ENCODE measurements at regions of chr2 and their contacts with region 1.

Region 1: DNA sequence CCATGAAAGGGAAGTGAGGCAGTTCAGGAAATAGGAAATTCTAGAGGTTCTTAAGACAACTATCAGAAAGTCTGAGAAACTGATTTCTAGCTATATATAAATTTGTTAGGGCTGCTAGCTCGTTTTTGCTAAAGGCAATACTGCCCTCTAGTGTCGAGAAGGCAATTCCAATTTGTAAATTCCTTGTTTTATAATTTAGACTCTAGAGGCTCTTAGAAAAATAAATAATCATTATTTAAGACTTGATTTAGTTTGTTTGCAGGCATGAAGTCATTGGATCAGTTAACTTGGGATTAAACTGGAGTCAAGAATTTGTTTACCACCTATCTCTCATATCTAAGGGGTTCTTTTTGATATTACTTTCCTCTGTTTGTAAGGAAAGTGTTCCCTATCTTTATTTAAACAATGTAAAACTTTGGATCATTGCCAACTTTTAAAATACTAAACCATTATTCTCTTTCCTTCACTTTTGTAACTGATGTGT is 66.2 kb downstream of the ACVR2A start:
- DNase-seq: no peak
- ATAC-seq: peak; percentile 40 to 84 (median 60)
- H3K4me3 ChIP-seq: no peak overlapping the region
- H3K27ac ChIP-seq: no peak overlapping the region
- H3K4me1 ChIP-seq: peaks cover 4% of the 10 kb centered on the region
- H3K27me3 ChIP-seq: no peaks in the 10 kb centered on the region
- CTCF ChIP-seq: peak; percentile 85

Region 2: GRCh38 chr2:146734042-146734820 is 1176.8 kb before region 1 on chr2:
- intact Hi-C with region 1: loop called in 1 of 2 experiments (anchors 5 kb)
- DNase-seq: no peak
- ATAC-seq: peak; percentile 71 to 81 (median 80)
- H3K4me3 ChIP-seq: no peak overlapping the region
- H3K27ac ChIP-seq: no peak overlapping the region
- H3K4me1 ChIP-seq: peaks cover 6% of the 10 kb centered on the region
- H3K27me3 ChIP-seq: no peaks in the 10 kb centered on the region
- CTCF ChIP-seq: peak; percentile 53

Region 3: GRCh38 chr2:146927080-146927711 is 983.8 kb before region 1 on chr2:
- intact Hi-C with region 1: loop called in 1 of 2 experiments (anchors 10 kb)
- DNase-seq: peak; percentile 42 to 66
- ATAC-seq: peak in 3 of 4 donors; percentile 55 to 60 (median 59)
- H3K4me3 ChIP-seq: no peak overlapping the region
- H3K27ac ChIP-seq: no peak overlapping the region
- H3K4me1 ChIP-seq: no peaks in the 10 kb centered on the region
- H3K27me3 ChIP-seq: no peaks in the 10 kb centered on the region
- CTCF ChIP-seq: peak; percentile 39

Region 4: DNA sequence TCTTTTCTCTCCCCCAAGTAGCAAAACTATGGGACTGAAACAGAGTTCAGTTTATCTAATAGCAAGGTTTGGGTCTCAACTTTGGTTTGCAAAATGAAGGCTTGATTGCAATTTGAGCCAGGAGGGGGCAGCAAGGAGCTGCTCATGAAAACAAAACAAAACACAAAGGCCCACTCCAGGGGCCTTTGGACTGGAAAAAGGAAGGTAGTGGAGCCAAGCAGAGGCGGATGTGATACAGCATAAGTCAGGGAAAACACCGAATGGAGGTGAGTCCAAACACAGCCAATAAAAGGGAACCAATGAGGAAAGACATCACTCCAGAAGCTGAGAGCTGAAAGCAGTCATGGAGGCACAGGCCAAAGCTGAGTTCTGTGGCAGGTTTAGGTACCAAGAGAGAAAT is 865.9 kb before region 1 on chr2:
- intact Hi-C with region 1: loop called in 1 of 2 experiments (anchors 1 kb)
- DNase-seq: peak; percentile 22 to 55
- ATAC-seq: no peak
- H3K4me3 ChIP-seq: no peak overlapping the region
- H3K27ac ChIP-seq: no peak overlapping the region
- H3K4me1 ChIP-seq: no peaks in the 10 kb centered on the region
- H3K27me3 ChIP-seq: no peaks in the 10 kb centered on the region
- CTCF ChIP-seq: peak; percentile 64

Region 5: GRCh38 chr2:147082850-147083522 is 828.0 kb before region 1 on chr2:
- intact Hi-C with region 1: loop called (anchors 5 to 10 kb)
- DNase-seq: no peak
- ATAC-seq: peak; percentile 48 to 82 (median 64)
- H3K4me3 ChIP-seq: no peak overlapping the region
- H3K27ac ChIP-seq: no peak overlapping the region
- H3K4me1 ChIP-seq: no peaks in the 10 kb centered on the region
- H3K27me3 ChIP-seq: no peaks in the 10 kb centered on the region
- CTCF ChIP-seq: peak; percentile 95

Region 6: GRCh38 chr2:147345246-147345645 is 565.8 kb before region 1 on chr2:
- intact Hi-C with region 1: loop called in 1 of 2 experiments (anchors 10 kb)
- DNase-seq: no peak
- ATAC-seq: no peak
- H3K4me3 ChIP-seq: no peak overlapping the region
- H3K27ac ChIP-seq: no peak overlapping the region
- H3K4me1 ChIP-seq: no peaks in the 10 kb centered on the region
- H3K27me3 ChIP-seq: no peaks in the 10 kb centered on the region
- CTCF ChIP-seq: no peak

Region 7: GRCh38 chr2:147843864-147844696 is 67.0 kb before region 1 on chr2:
- intact Hi-C with region 1: loop called (anchors 5 to 10 kb)
- DNase-seq: peak; percentile 95 to 97
- ATAC-seq: peak; percentile 93 to 94 (median 93)
- H3K4me3 ChIP-seq: peak overlapping the region; percentile 93
- H3K27ac ChIP-seq: peak overlapping the region; percentile 99
- H3K4me1 ChIP-seq: peaks cover 22% of the 10 kb centered on the region
- H3K27me3 ChIP-seq: no peaks in the 10 kb centered on the region
- CTCF ChIP-seq: peak; percentile 8